Colonic mucosa (tissue), 4 donors: ENCODE measurements at regions of chr10 and their contacts with region 1.

Region 1: GRCh38 chr10:110547139-110547761 is 20.2 kb upstream of the SMC3 start:
- DNase-seq: no peak
- H3K4me3 ChIP-seq: no peak overlapping the region
- H3K27ac ChIP-seq: no peak overlapping the region
- H3K4me1 ChIP-seq: no peaks in the 10 kb centered on the region
- H3K27me3 ChIP-seq: no peaks in the 10 kb centered on the region
- CTCF ChIP-seq: peak; percentile 68

Region 2: GRCh38 chr10:110279407-110279986 is 267.8 kb before region 1 on chr10:
- intact Hi-C with region 1: no loop called
- DNase-seq: peak; percentile 65
- H3K4me3 ChIP-seq: no peak overlapping the region
- H3K27ac ChIP-seq: no peak overlapping the region
- H3K4me1 ChIP-seq: peaks cover 3% of the 10 kb centered on the region
- H3K27me3 ChIP-seq: no peaks in the 10 kb centered on the region
- CTCF ChIP-seq: peak; percentile 60

Region 3: GRCh38 chr10:110354322-110354766 is 192.9 kb before region 1 on chr10:
- intact Hi-C with region 1: loop called (anchors 5 kb)
- DNase-seq: peak; percentile 83
- H3K4me3 ChIP-seq: no peak overlapping the region
- H3K27ac ChIP-seq: no peak overlapping the region
- H3K4me1 ChIP-seq: no peaks in the 10 kb centered on the region
- H3K27me3 ChIP-seq: no peaks in the 10 kb centered on the region
- CTCF ChIP-seq: peak; percentile 74

Region 4: GRCh38 chr10:110613341-110613995 is 66.2 kb after region 1 on chr10:
- intact Hi-C with region 1: no loop called
- DNase-seq: no peak
- H3K4me3 ChIP-seq: no peak overlapping the region
- H3K27ac ChIP-seq: no peak overlapping the region
- H3K4me1 ChIP-seq: no peaks in the 10 kb centered on the region
- H3K27me3 ChIP-seq: no peaks in the 10 kb centered on the region
- CTCF ChIP-seq: no peak